ENCODE measurements at regions of chr21 and their contacts with region 1.

Region 1: DNA sequence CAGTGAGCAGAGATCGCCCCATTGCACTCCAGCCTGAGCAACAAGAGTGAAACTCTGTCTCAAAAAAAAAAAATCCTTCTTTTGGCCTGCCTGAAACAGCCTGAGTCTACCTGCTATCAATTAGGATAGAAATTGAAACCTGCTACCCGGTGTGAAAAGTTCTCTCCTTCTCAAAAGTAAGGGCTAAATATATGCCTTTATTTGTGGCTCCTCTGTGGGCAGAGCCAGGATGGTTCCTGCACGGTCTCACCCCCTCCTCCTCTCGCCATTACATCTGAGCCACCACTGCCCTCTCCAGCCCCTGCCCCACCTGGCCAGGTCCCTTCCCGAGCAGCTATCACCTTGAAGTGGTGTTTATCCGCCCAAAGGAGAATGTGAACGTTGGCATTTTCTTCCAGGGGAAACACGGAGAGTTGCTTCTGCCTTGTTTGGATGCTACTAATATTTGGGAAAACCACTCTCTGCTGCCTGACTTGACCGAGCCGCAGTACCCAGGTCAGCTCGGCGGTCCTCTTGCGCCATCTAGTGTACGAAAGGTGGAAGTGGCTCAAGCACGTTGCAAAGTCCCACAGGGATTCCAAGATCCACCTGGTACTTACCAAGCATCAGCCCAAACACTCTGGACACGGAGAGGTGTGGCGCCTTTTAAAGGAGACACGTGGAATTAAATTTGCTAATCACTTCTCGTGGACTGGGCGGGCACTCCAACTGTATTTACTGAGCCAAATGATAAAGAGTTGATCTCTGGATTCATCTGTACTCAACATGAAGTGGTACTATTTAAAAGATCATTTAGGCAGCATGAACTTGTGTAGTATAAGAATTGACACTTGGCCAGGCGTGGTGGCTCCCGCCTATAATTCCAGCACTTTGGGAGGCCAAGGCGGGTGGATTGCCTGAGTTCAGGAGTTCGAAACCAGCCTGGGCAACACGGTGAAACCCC is 31.9 kb downstream of the SETD4 start:
- H3K4me3 Mint-ChIP-seq: no peak overlapping the region
- H3K27ac Mint-ChIP-seq: no peak overlapping the region
- H3K4me1 Mint-ChIP-seq: peaks cover 5% of the 10 kb centered on the region
- H3K27me3 Mint-ChIP-seq: peaks cover 4% of the 10 kb centered on the region

Region 2: DNA sequence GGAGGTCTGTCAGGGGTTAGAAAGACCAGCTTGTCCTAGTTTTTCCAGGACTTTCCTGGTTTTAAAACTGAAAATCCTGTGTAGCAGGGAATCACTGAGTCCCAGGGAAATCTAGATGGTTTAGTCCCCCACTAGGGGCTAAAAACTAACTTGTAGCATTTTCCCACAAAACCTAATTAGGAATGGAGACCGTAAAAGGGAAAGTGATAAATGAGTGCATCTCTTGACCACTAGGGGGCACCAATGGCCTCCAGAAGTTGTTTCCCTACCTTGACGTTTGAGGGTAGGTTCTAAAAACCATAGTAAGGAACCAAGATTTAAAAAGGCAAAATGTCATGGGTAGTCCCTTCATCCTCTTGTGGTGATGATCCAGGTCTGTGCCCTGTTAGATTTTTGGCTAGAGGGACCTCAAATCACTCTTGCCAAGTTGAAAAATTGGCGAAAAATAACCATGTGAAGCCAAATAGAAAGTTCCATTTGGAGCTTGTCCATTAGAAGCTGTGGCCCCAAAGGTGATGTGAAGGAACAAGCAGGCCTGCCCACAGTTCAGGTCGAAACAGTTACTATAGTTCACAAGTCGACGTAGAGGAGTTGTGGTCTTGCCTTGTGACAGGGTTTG is 1335.1 kb before region 1 on chr21:
- intact Hi-C with region 1: loop called (anchors 2 kb)
- H3K4me3 Mint-ChIP-seq: no peak overlapping the region
- H3K27ac Mint-ChIP-seq: no peak overlapping the region
- H3K4me1 Mint-ChIP-seq: peaks cover 5% of the 10 kb centered on the region
- H3K27me3 Mint-ChIP-seq: peaks cover 16% of the 10 kb centered on the region

Region 3: GRCh38 chr21:34745557-34746255 is 1282.7 kb before region 1 on chr21:
- intact Hi-C with region 1: loop called (anchors 5 kb)
- H3K4me3 Mint-ChIP-seq: peak overlapping the region; percentile 57
- H3K27ac Mint-ChIP-seq: no peak overlapping the region
- H3K4me1 Mint-ChIP-seq: no peaks in the 10 kb centered on the region
- H3K27me3 Mint-ChIP-seq: peaks cover 26% of the 10 kb centered on the region

Measured in dendritic cell treated with granulocyte-macrophage colony-stimulating factor and Interleukin-4, amounts not matched to agents 40 ng/mL and 50 ng/mL, for 4 days (primary cell).